ENCODE measurements at regions of chr3 and their contacts with region 1.

Region 1: DNA sequence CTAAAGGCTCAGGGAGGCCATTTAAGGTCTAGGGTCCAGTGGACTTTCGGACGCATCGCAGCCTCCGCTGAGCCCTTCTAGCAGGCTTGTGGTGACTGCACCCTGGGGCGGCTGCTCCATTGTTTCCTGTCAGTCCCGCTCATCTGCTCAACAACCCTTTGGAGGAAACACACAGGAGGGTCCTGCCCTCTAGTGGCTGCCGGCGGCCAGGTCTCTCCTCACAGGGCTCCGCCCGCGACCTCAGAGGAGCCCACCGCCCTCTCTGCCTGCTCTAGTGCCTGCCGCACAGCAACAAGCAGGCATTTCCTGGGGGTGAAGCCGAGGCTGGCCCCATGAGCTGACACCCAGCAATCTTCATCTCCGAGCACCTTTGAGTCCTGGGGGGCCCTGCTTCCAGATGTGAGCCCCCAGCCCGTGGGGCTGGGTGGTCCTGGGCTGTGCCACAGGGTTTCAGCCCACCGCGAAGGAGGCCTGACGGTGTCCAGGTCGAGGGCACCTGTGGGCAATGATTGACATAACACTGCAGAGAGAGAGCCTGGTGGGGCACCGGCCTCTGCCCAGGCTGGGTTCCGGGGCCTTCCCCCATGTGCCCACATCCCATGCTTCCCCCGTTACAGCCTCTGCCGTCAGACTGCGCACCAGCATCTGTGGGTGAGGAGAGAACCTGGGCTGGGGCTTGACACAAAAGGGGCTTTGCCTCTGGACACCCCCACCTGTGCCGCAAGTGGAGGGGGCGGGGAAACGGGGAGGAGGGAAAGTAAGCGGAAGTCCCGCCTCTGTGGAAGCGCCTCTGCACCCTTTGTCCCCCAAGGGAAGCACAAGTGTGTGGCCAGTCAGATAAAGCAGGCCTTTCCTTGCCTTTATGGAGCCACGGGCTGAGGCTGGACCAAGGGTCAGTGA is 27.0 kb upstream of the SFMBT1 start:
- DNase-seq: peak; percentile 59
- H3K4me3 ChIP-seq: peak overlapping the region; percentile 44 to 67 (median 62)
- H3K27ac ChIP-seq: no peak overlapping the region
- H3K4me1 ChIP-seq: peaks cover 19% of the 10 kb centered on the region
- H3K27me3 ChIP-seq: no peaks in the 10 kb centered on the region
- CTCF ChIP-seq: peak; percentile 79 to 94

Region 2: DNA sequence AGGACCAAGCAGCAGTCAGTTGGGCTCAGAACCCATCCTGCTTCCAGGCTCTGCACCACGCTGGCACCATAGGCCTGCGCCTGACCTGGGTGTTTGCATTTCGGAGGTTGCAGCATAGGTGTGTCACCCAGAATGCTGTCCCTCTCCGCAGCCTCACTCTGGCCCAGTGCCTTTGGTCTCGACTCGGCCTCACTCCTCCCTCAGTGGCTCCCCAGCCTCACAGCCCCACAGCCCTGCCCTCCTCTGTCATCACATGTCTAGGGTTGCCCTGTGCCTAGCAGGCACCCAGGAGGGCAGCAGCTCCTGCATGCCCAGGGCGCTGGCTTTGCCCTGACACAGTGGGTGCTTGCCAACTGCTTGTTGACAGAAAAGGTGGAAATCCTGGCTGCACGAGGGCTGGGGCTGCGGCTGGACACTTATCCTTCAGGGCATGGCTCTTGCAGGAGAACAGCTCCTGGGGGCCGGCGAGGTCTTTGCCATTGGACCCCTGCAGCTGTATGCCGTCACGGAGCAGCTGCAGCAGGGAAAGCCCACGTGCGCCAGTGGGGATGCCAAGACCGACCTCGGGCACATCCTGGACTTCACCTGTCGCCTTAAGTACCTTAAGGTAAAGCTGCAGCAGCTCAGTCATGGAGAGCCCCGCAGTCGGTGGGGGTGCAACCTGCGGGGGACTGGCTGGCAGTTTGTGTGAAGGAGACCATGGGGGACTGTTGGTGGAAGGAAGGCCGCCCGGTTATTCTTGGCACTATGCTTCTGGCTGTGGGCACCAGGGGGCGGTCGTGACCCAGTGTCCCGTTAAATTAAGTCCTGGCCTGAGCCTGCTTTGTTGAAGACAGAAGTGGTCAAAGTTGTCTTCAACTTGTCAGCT is 601.3 kb before region 1 on chr3:
- CTCF ChIA-PET with region 1: no interaction called
- dilution Hi-C with region 1: no loop called
- in situ Hi-C with region 1: no loop called
- intact Hi-C with region 1: loop called (anchors 5 kb)
- DNase-seq: no peak
- H3K4me3 ChIP-seq: no peak overlapping the region
- H3K27ac ChIP-seq: no peak overlapping the region
- H3K4me1 ChIP-seq: peaks cover 16% of the 10 kb centered on the region
- H3K27me3 ChIP-seq: no peaks in the 10 kb centered on the region
- CTCF ChIP-seq: peak; percentile 65 to 70

Region 3: DNA sequence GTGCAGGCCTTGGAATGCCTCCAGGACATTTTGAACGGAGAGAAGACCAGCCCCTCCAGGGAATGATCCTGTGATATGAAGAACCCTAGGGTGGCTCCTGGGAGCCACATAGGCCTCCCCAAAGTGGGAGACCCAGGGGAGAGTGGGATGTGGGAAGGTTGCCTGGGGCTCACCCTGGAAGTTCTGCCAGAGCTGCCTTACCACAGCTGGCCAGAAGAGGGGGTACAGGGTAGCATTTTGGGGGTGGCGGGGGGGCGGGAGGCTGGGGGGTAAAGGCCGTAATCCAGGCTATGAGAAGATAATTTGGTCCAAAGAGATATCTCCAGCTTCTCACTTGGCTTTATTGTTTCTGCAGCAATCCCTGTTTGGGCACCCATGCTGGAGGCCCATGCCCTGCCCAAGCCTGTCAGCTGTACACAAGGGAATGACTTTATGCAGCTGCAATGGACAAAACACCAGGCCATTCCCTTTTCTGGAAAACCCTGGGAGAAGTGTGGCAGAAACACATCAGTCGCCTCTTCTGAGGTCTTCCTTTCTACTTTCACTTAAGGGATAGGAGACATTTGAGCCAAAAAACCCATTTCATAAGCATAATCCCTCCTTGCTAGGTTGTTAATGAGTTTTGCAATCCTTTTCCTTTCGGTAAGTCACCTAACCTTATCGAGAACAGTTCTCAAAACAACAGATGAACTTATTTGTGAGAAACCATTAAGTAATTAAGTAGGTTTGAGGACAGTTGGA is 227.0 kb before region 1 on chr3:
- CTCF ChIA-PET with region 1: no interaction called
- dilution Hi-C with region 1: no loop called
- in situ Hi-C with region 1: loop called in 1 of 2 experiments (anchors 10 kb)
- intact Hi-C with region 1: loop called (anchors 1 kb)
- DNase-seq: no peak
- H3K4me3 ChIP-seq: no peak overlapping the region
- H3K27ac ChIP-seq: no peak overlapping the region
- H3K4me1 ChIP-seq: peaks cover 3% of the 10 kb centered on the region
- H3K27me3 ChIP-seq: no peaks in the 10 kb centered on the region
- CTCF ChIP-seq: peak; percentile 5 to 45

Region 4: GRCh38 chr3:52897130-52898122 is 175.5 kb before region 1 on chr3 and contains the start of gene STIMATE:
- CTCF ChIA-PET with region 1: no interaction called
- dilution Hi-C with region 1: no loop called
- in situ Hi-C with region 1: no loop called
- intact Hi-C with region 1: loop called (anchors 5 kb)
- DNase-seq: peak; percentile 84
- H3K4me3 ChIP-seq: peak within 1 kb of the TSS; percentile 64 to 88 (median 76)
- H3K27ac ChIP-seq: peak within 1 kb of the TSS; percentile 47
- H3K4me1 ChIP-seq: peaks cover 14% of the 10 kb centered on the region
- H3K27me3 ChIP-seq: no peaks in the 10 kb centered on the region
- CTCF ChIP-seq: no peak
- total RNA-seq, gene STIMATE: 14.7 to 20.9 TPM

Region 5: DNA sequence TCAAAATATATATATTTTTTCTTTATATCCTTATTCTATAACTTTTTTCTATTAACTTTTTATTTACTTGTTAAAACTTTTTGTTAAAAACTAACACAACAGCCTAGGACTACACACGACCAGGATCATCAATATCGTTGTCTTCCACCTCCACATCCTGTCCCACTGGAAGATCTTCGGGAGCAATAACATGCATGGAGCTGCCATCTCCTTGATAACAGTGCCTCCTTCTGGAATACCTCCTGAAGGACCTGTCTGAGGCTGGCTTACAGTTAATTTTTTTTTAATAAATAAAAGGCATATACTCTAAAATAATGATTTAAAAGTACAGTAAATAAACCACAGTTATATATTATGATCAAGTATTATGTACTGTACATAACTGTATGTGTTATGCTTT is 86.0 kb before region 1 on chr3:
- CTCF ChIA-PET with region 1: no interaction called
- dilution Hi-C with region 1: no loop called
- in situ Hi-C with region 1: no loop called
- intact Hi-C with region 1: loop called (anchors 2 kb)
- DNase-seq: no peak
- H3K4me3 ChIP-seq: no peak overlapping the region
- H3K27ac ChIP-seq: no peak overlapping the region
- H3K4me1 ChIP-seq: no peaks in the 10 kb centered on the region
- H3K27me3 ChIP-seq: no peaks in the 10 kb centered on the region
- CTCF ChIP-seq: peak in 1 of 2 donors; percentile 43

Region 6: DNA sequence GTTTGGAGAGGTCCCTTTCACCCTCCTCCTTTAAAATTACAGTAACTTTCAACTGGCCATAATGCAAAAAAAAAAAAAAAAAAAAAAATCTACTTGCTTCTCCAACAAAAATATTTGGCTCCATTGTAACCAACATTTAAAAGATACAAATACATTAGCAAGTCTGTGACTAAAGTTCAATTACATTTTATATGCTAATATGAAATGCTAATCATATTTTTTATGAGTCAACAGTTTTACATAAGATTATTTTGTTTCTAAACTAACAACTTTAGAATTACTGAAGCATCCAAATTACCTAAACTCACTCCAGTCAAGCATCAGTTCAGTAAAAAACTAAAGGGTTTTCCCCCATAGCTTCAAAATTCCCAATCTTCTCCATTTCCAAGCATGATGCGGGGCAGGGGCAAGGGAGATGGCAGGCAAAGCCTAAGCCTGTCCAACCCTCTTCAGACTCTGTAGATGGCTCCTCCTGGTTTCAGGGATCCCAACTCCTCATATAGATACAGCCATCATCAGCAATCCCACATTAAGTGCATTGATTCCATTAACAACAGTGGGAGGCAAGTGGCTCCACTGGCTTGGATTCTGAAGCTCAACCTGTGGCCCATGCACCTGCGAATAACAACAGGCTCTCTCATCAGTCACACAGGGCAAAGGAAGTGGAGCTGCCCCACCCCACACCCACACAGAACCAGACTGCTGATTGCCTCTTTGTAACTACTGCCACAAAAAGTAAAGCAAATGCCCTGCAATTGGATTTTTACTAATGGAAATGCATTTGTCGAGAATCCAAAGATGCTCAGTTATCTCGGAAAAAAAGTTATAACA is 42.1 kb before region 1 on chr3:
- CTCF ChIA-PET with region 1: no interaction called
- dilution Hi-C with region 1: no loop called
- in situ Hi-C with region 1: no loop called
- intact Hi-C with region 1: no loop called
- DNase-seq: peak; percentile 52
- H3K4me3 ChIP-seq: no peak overlapping the region
- H3K27ac ChIP-seq: no peak overlapping the region
- H3K4me1 ChIP-seq: peaks cover 11% of the 10 kb centered on the region
- H3K27me3 ChIP-seq: no peaks in the 10 kb centered on the region
- CTCF ChIP-seq: no peak

Region 7: DNA sequence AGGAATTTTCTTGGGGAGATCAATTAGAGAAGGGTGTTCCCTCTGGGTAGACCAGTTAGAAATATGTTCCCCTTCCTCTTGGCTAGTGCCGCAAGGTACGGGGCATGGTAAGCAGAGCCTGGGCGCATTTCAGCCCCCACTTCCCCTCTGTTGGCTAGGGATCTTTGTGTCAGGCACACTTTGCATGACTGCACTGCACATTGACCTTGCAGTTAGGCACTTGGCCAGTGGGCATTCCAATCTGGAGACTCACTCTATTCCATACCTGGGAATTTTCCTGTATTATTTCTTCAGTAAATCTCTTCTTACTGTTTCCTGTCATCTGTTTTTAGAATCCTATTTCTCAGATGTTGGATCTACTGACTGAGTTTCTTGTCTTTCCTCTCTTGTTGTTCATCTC is 391.5 kb after region 1 on chr3:
- CTCF ChIA-PET with region 1: no interaction called
- dilution Hi-C with region 1: no loop called
- in situ Hi-C with region 1: no loop called
- intact Hi-C with region 1: no loop called
- DNase-seq: peak; percentile 20
- H3K4me3 ChIP-seq: no peak overlapping the region
- H3K27ac ChIP-seq: no peak overlapping the region
- H3K4me1 ChIP-seq: no peaks in the 10 kb centered on the region
- H3K27me3 ChIP-seq: no peaks in the 10 kb centered on the region
- CTCF ChIP-seq: no peak

Region 8: DNA sequence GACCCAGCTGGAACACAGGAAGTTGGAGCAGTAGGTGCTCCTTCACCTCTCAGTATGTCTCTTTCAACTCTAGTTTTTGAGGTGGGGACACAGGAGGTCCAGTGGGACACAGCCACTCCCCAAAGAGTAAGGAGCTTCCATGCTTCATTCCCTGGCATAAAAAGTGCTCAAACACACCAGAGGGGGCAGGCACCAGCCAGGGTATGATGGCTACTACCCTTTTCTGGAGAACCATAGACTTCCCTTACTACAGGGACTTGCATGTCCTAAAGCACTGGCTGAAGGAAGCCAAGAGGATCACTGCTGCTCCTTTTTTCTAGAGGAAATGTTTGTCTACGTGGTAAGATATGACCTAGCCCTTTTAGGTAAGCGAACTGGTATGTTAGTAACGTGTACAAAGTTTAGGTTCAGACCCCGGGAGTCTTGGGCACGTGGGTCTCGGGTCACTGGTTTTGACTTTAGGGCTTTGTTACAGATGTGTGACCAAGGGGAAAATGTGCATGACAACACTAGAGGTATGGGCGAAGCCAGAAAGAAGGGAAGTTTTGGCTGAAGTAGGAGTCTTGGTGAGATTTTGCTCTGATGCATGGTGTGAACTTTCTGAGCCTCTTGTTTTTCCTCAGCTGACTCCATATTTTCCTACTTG is 785.3 kb after region 1 on chr3:
- CTCF ChIA-PET with region 1: no interaction called
- dilution Hi-C with region 1: no loop called
- in situ Hi-C with region 1: no loop called
- intact Hi-C with region 1: no loop called
- DNase-seq: no peak
- H3K4me3 ChIP-seq: no peak overlapping the region
- H3K27ac ChIP-seq: no peak overlapping the region
- H3K4me1 ChIP-seq: no peaks in the 10 kb centered on the region
- H3K27me3 ChIP-seq: no peaks in the 10 kb centered on the region
- CTCF ChIP-seq: no peak

Measured in mammary epithelial cell (primary cell).